ENCODE measurements at regions of chrX and their contacts with region 1.

Region 1: DNA sequence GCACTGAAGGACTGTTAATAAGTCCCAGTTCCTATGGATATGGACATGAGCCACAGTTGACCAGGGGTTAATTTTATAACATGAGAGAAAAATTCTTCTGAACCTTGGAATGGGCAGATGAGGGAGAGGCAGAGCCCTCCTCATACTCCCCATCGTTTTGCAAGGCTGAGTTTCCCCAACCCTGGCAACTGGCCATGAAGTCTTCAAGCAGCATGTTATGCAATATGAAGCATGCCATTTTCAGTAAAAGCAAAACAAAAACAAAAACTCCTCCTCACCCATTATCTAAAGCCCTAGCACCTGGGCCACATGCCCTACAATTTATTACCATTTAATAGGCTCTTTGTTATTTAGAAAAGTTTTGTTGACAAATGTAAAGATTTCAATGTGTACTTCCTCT is 64.5 kb downstream of the GPC4 start:
- DNase-seq: no peak
- ATAC-seq: no peak
- H3K4me3 ChIP-seq: no peak overlapping the region
- H3K27ac ChIP-seq: no peak overlapping the region
- H3K4me1 ChIP-seq: no peaks in the 10 kb centered on the region
- H3K27me3 ChIP-seq: no peaks in the 10 kb centered on the region; the same call in 1 of the 2 replicates
- CTCF ChIP-seq: no peak

Region 2: GRCh38 chrX:132270699-132271098 is 1080.1 kb before region 1 on chrX:
- CTCF ChIA-PET with region 1: interaction called, 12 read pairs
- POLR2A ChIA-PET with region 1: no interaction called
- in situ Hi-C with region 1: no loop called
- intact Hi-C with region 1: no loop called
- DNase-seq: no peak
- ATAC-seq: no peak
- H3K4me3 ChIP-seq: no peak overlapping the region
- H3K27ac ChIP-seq: no peak overlapping the region
- H3K4me1 ChIP-seq: no peaks in the 10 kb centered on the region
- H3K27me3 ChIP-seq: no peaks in the 10 kb centered on the region
- CTCF ChIP-seq: no peak

Region 3: DNA sequence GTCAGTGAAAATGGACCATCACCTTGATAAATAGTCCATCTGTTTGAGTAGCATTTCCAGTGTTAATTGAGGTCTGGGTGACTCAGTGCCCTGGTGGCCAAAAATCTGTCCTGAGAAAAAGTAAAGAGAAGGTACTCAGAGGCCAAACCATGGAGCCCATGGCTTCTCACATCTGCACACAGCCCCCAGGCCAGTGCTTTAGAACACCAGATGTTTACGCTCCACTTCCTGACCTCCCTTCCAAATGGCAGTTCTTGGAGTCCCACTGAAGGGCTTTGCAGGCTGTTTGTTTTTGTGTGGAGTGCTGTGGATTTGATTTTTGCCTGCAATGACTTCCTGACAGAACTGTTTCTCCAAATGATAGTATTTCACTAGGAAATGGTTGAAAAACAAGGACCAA is 124.8 kb after region 1 on chrX:
- CTCF ChIA-PET with region 1: no interaction called
- POLR2A ChIA-PET with region 1: no interaction called
- in situ Hi-C with region 1: no loop called
- intact Hi-C with region 1: no loop called
- DNase-seq: no peak
- ATAC-seq: no peak
- H3K4me3 ChIP-seq: no peak overlapping the region
- H3K27ac ChIP-seq: no peak overlapping the region
- H3K4me1 ChIP-seq: no peaks in the 10 kb centered on the region
- H3K27me3 ChIP-seq: no peaks in the 10 kb centered on the region
- CTCF ChIP-seq: no peak

Measured in Panc1 (cell line).